ENCODE measurements at regions of chr19 and their contacts with region 1.

Region 1: DNA sequence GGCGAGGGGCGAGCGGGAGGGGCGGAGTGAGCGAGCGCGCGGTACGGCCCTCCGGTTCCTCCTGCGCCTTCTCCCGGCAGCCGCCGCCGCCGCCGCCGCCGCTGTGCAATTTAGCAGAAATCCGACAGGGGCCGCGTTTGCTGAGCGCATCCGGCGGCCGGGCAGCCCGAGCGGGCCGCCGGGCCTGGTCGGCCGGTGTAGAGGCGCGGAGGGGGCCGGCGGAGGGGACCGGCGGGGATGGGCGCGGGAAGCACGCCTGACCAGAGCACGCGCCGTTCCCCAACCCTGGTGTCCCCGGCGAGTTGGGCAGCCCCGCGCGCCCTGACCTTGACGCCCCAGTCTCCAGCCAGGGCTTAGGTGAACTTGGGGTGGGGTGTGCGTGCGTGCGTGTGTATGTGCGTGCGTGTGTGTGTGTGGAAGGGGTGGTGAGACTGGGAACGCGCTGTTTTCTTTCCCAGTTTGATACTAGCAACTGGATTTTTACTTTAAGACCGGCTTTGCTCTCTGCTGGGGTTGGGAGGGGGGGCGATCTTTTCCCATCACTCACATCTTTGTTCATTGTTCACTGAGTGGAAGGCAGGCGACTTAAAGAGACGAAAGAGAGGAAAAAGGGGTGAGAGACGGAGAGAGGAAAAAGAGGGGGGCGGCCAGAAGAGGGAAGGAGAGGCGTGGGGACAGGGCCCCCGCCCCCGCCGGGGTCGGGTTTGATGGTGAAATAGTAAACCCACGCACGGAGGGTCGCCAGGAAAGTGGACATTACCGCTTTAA is 144.3 kb upstream of the ZNF536 start:
- DNase-seq: no peak

Region 2: DNA sequence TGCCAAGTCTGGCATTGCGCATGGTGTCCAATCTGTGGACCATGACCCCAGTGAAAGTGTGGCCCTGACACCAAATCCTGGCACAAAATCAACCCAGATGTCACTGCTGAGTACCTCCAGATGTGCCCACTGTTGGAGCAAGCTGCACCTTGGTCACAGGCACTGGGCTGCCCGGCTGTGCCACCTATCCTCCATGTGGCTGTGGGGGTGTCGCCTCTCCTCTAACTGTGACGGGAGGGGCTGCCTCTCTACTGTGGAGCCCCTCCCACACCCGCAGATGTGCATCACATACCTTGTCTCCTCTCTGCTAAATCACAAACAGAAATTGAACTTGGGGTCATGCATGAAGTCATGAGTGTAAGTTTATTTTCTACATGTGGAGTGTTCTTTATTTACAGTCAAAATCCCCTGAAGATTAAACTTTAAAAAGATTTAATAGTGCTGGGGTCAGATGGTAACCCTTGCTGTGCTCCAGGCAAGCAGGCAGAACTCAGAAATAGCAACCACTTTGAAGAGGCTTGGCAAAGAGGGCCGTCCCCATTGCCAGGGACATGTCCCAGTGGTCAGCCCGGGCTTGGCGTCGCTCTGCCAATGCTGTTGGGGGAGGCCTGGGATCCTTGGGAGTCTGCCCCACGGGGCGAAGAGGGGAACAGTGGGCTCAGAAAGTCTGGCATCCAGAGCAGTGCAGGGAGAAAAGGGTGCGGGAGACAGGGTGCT is 98.0 kb after region 1 on chr19:
- intact Hi-C with region 1: loop called (anchors 5 kb)
- DNase-seq: no peak

Region 3: GRCh38 chr19:30387311-30388115 is 159.7 kb after region 1 on chr19:
- intact Hi-C with region 1: loop called (anchors 5 kb)
- DNase-seq: peak; percentile 74

Region 4: DNA sequence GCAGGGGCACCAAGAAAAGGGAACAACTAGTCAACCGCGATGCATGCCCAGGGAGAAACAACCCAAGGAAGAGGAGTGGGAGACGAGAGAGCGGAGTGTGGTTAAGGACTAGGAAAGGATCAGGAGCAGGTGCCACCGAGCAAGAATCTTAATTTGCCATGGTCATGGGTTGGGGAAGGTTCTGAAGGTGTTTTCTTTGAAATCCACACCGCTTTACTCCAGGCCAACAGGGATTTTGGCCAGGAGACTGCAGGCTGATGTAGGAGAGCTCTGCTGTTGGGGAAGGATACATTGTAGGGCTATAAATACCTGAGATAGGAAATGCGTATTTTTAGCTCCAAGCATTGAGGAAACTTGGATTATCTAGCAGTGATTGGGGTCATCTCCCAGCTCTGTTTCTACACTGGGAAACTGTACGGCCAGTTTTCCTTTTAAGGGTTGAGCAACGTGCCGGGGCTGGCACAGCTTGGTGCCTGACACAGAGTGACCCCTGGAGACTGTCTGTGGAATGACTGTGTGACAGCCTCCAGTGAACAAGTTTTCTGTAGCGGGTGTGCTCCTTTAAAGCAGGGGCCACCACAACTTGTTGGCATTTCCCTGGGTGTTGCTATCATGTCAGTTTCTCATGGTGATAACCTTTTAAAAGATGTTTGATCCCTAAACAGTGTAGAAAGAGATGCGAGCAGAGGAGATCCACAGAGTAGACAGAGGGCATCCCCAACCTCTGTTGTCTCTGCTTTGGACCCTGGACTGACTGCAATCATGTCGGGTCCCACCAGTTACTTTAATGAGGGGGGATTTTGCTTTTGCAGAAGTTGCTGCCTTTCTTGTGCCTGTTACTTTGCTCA is 178.6 kb after region 1 on chr19:
- intact Hi-C with region 1: loop called (anchors 5 kb)
- DNase-seq: peak; percentile 66

Measured in cardiac septum (tissue), 1 donor.